Caco-2 (cell line): ENCODE measurements at regions of chr2 and their contacts with region 1.

Region 1: DNA sequence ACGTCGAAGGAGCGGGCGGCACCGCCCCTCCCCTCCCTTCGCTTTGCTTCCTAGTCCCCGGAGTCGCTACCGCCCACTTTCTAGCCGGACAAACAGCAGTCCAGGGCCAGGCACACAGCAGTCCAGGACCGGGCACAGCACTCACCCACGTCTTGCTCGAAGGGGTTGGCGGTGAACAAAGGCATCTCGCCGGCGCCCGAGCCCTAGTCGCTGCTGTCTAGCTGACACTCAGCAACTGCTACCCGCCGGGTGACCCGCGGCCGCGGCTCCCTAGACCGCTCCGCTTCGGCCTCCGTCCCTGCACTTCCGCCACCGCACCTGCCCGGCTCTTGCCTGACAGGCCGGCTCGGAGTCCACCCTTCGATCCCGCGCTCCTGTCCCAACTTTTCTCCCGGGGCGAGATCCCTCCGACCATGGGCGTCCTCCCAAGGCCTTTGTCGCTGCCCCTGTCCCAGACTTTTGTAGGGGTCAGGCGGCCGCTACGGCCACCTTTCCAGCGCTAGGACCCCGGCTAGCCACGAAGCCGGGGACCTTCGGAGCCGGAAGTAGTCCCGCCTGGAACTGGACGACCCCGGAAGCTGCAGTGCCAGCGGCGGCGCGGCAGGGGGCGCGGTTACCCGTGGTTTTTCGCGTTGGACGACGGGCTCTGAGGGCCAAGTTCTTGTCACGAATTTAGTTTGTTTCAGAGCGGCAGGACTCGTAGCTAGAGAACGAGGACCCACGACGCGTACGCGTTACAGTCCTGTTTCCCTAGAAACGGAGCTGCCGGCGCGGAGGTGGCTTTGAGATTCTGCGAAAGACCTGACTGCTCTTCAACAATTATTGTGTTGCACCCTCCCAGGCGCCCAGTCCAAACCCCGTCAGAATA is at the start of gene STAM2:
- DNase-seq: peak; percentile 93 to 97
- H3K4me3 ChIP-seq: peak within 1 kb of the TSS; percentile 84
- H3K4me3 Mint-ChIP-seq: peak within 1 kb of the TSS; percentile 97
- H3K27ac Mint-ChIP-seq: peak within 1 kb of the TSS; percentile 99
- H3K4me1 ChIP-seq: peaks cover 32% of the 10 kb centered on the region
- H3K4me1 Mint-ChIP-seq: peaks cover 33% of the 10 kb centered on the region
- H3K27me3 ChIP-seq: no peaks in the 10 kb centered on the region
- H3K27me3 Mint-ChIP-seq: no peaks in the 10 kb centered on the region
- CTCF ChIP-seq: peak; percentile 94 to 97
- total RNA-seq, gene STAM2: 20.3 and 24.4 TPM in 2 replicates

Region 2: GRCh38 chr2:152036611-152037469 is 138.9 kb before region 1 on chr2:
- CTCF ChIA-PET with region 1: interaction called, 4 read pairs
- POLR2A ChIA-PET with region 1: no interaction called
- intact Hi-C with region 1: loop called (anchors 1 kb)
- DNase-seq: peak; percentile 71 to 78
- H3K4me3 ChIP-seq: no peak overlapping the region
- H3K4me3 Mint-ChIP-seq: no peak overlapping the region
- H3K27ac Mint-ChIP-seq: no peak overlapping the region
- H3K4me1 ChIP-seq: no peaks in the 10 kb centered on the region
- H3K4me1 Mint-ChIP-seq: no peaks in the 10 kb centered on the region
- H3K27me3 ChIP-seq: no peaks in the 10 kb centered on the region
- H3K27me3 Mint-ChIP-seq: no peaks in the 10 kb centered on the region
- CTCF ChIP-seq: peak; percentile 80 to 83

Region 3: DNA sequence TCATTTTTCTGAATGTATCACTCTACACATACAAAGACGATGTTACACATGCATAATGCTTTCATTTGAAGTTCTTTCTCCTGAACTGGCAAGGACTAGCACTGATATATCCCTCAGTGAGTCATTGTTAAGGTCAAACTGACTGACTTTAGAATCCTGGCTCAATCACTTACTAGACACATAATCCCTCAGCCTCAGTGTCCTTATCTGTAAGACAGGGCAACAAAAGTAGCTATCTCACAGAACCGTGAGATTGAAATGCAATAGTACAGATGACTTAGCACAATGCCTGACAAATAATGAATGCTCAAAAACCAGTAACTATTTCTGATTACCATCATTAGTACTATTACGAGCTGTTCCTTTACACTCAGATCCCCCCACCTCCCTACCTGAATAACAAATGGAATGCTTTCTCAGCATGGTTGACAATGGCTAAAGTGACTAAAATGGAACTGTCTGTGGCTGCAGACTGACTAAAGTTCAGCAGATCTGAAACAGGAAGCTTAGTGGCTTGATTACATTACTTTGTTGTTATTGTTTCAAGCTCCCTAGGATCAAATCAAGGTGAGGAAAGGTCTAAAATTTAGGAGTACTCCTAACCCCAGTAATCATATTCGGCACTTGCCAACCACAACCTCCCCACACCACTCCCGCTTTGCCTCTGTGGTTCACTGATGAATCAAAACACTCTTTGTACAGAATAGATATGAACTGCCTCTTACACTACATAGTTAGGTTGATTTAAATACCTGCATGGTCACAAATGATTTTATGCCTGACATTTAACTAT is 41.0 kb before region 1 on chr2:
- CTCF ChIA-PET with region 1: interaction called, 3 read pairs
- POLR2A ChIA-PET with region 1: no interaction called
- intact Hi-C with region 1: loop called (anchors 2 kb)
- DNase-seq: no peak
- H3K4me3 ChIP-seq: no peak overlapping the region
- H3K4me3 Mint-ChIP-seq: peak overlapping the region; percentile 8
- H3K27ac Mint-ChIP-seq: peak overlapping the region; percentile 46
- H3K4me1 ChIP-seq: peaks cover 21% of the 10 kb centered on the region
- H3K4me1 Mint-ChIP-seq: peaks cover 13% of the 10 kb centered on the region
- H3K27me3 ChIP-seq: no peaks in the 10 kb centered on the region
- H3K27me3 Mint-ChIP-seq: no peaks in the 10 kb centered on the region
- CTCF ChIP-seq: no peak

Region 4: GRCh38 chr2:152240559-152241231 is 65.0 kb after region 1 on chr2:
- CTCF ChIA-PET with region 1: no interaction called
- POLR2A ChIA-PET with region 1: no interaction called
- intact Hi-C with region 1: no loop called
- DNase-seq: no peak
- H3K4me3 ChIP-seq: no peak overlapping the region
- H3K4me3 Mint-ChIP-seq: no peak overlapping the region
- H3K27ac Mint-ChIP-seq: no peak overlapping the region
- H3K4me1 ChIP-seq: peaks cover 19% of the 10 kb centered on the region
- H3K4me1 Mint-ChIP-seq: peaks cover 8% of the 10 kb centered on the region
- H3K27me3 ChIP-seq: no peaks in the 10 kb centered on the region
- H3K27me3 Mint-ChIP-seq: no peaks in the 10 kb centered on the region
- CTCF ChIP-seq: no peak

Region 5: GRCh38 chr2:152432206-152432653 is 256.5 kb after region 1 on chr2:
- CTCF ChIA-PET with region 1: no interaction called
- POLR2A ChIA-PET with region 1: no interaction called
- intact Hi-C with region 1: no loop called
- DNase-seq: no peak
- H3K4me3 ChIP-seq: no peak overlapping the region
- H3K4me3 Mint-ChIP-seq: no peak overlapping the region
- H3K27ac Mint-ChIP-seq: no peak overlapping the region
- H3K4me1 ChIP-seq: no peaks in the 10 kb centered on the region
- H3K4me1 Mint-ChIP-seq: peaks cover 10% of the 10 kb centered on the region
- H3K27me3 ChIP-seq: no peaks in the 10 kb centered on the region
- H3K27me3 Mint-ChIP-seq: no peaks in the 10 kb centered on the region
- CTCF ChIP-seq: no peak

Region 6: DNA sequence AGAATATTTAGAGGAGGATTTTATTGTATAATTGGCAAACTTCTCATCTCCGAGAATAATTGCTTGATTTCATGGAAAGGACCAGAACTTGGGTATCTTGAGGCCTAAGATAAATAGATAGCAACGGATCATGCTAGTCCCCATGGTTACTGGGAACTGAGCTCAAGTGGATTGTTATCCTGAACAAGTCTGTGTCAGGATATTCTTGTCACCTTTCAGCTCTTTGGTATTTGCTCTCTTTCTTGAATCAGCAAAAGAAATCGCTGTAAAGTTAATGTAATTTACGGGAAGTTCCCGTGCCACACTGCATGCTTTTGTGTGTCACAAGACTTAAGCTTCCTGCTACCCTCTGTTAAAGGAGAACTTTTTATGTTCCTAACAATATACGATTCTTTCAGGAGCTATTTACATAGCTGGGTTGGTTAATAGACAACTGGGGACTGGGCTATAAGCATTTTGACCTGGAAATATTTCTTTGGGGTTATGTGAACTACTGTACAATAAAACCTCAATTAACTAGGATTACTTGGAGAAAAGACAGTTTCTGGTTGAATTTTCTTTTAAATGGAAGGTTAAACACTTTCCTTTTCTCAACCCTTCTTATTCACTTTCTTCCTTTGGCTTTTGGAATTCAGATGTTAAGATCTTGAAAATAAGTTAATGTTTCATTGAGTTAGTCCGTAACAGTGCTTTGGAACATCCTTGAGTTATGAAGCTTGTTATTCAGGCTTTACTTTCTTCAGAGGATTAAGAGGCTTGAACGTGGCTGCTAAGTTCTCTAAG is 310.5 kb after region 1 on chr2:
- CTCF ChIA-PET with region 1: no interaction called
- POLR2A ChIA-PET with region 1: interaction called, 3 read pairs
- intact Hi-C with region 1: loop called (anchors 10 kb)
- DNase-seq: peak; percentile 43 to 61
- H3K4me3 ChIP-seq: no peak overlapping the region
- H3K4me3 Mint-ChIP-seq: peak overlapping the region; percentile 7
- H3K27ac Mint-ChIP-seq: peak overlapping the region; percentile 38
- H3K4me1 ChIP-seq: peaks cover 60% of the 10 kb centered on the region
- H3K4me1 Mint-ChIP-seq: peaks cover 51% of the 10 kb centered on the region
- H3K27me3 ChIP-seq: no peaks in the 10 kb centered on the region
- H3K27me3 Mint-ChIP-seq: no peaks in the 10 kb centered on the region
- CTCF ChIP-seq: no peak

Region 7: GRCh38 chr2:152627351-152627957 is 451.8 kb after region 1 on chr2:
- CTCF ChIA-PET with region 1: no interaction called
- POLR2A ChIA-PET with region 1: no interaction called
- intact Hi-C with region 1: loop called (anchors 1 kb)
- DNase-seq: peak in 1 of 2 experiments; percentile 19
- H3K4me3 ChIP-seq: no peak overlapping the region
- H3K4me3 Mint-ChIP-seq: no peak overlapping the region
- H3K27ac Mint-ChIP-seq: no peak overlapping the region
- H3K4me1 ChIP-seq: peaks cover 7% of the 10 kb centered on the region
- H3K4me1 Mint-ChIP-seq: peaks cover 10% of the 10 kb centered on the region
- H3K27me3 ChIP-seq: no peaks in the 10 kb centered on the region
- H3K27me3 Mint-ChIP-seq: no peaks in the 10 kb centered on the region
- CTCF ChIP-seq: peak; percentile 50 to 57

Region 8: DNA sequence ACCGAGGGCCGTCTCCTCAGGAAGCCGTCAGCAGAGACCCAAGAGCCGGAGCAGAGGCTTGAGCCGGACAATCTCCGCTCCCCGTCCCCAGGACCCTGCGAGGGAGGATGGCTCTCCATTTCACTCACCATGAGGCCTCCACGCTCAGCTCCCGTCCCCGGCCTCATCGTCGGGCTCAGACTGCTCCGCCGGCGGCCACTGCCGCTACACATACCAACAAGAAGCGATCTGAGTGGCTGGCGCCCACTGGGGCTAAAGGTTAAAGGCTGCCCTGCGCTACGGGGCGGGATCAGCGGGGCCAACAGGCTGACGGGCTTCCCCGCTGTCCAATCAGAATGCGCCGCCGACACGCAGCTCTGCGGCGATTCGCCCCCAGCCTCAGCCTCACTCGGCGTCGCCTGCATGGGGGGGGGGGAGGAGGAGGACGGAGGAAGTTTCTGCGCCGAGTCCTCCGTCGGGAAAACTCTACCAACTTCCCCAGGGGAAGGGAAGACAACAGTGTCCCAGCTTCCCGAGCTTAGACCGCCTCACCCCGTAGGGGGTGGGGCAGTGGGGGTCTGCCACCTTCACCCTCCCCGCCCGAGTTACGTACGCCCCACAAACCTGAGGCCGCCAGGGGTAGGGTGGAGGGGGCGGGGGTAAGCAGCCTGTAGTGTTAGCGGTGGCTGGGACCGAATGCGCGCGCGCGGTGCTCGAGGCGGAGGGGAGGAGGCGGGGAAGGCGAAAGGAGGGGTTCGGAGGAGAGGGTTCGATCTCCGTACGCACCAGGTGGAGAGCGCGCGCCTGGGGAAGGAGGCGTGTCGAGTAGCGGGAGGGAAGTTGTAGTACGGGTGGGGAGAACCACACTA is 541.8 kb after region 1 on chr2 and contains the start of gene PRPF40A:
- CTCF ChIA-PET with region 1: interaction called, 5 read pairs
- POLR2A ChIA-PET with region 1: no interaction called
- intact Hi-C with region 1: loop called (anchors 5 kb)
- DNase-seq: peak; percentile 99
- H3K4me3 ChIP-seq: peak within 1 kb of the TSS; percentile 88
- H3K4me3 Mint-ChIP-seq: peak within 1 kb of the TSS; percentile 96
- H3K27ac Mint-ChIP-seq: peak within 1 kb of the TSS; percentile 97
- H3K4me1 ChIP-seq: peaks cover 15% of the 10 kb centered on the region; the same call in 1 of the 2 replicates
- H3K4me1 Mint-ChIP-seq: peaks cover 22% of the 10 kb centered on the region
- H3K27me3 ChIP-seq: no peaks in the 10 kb centered on the region
- H3K27me3 Mint-ChIP-seq: no peaks in the 10 kb centered on the region
- CTCF ChIP-seq: no peak
- total RNA-seq, gene PRPF40A: 127 and 138 TPM in 2 replicates